ENCODE measurements at regions of chr15 and their contacts with region 1.

Region 1: GRCh38 chr15:97903971-97904572 is 56.4 kb upstream of the ARRDC4 start:
- DNase-seq: peak; percentile 51
- H3K4me3 ChIP-seq: no peak overlapping the region
- H3K27ac ChIP-seq: no peak overlapping the region
- H3K4me1 ChIP-seq: no peaks in the 10 kb centered on the region
- H3K27me3 ChIP-seq: no peaks in the 10 kb centered on the region
- CTCF ChIP-seq: peak in 3 of 4 experiments; percentile 41 to 70 (median 63)
- POLR2A ChIP-seq: no peak

Region 2: GRCh38 chr15:97552548-97552947 is 351.5 kb before region 1 on chr15:
- intact Hi-C with region 1: no loop called
- DNase-seq: no peak
- H3K4me3 ChIP-seq: no peak overlapping the region
- H3K27ac ChIP-seq: no peak overlapping the region
- H3K4me1 ChIP-seq: no peaks in the 10 kb centered on the region
- H3K27me3 ChIP-seq: no peaks in the 10 kb centered on the region
- CTCF ChIP-seq: no peak
- POLR2A ChIP-seq: no peak

Region 3: GRCh38 chr15:97585408-97585807 is 318.7 kb before region 1 on chr15:
- intact Hi-C with region 1: no loop called
- DNase-seq: no peak
- H3K4me3 ChIP-seq: no peak overlapping the region
- H3K27ac ChIP-seq: no peak overlapping the region
- H3K4me1 ChIP-seq: no peaks in the 10 kb centered on the region
- H3K27me3 ChIP-seq: no peaks in the 10 kb centered on the region
- CTCF ChIP-seq: no peak
- POLR2A ChIP-seq: no peak

Region 4: GRCh38 chr15:97947465-97948260 is 43.6 kb after region 1 on chr15:
- intact Hi-C with region 1: no loop called
- DNase-seq: no peak
- H3K4me3 ChIP-seq: no peak overlapping the region
- H3K27ac ChIP-seq: no peak overlapping the region
- H3K4me1 ChIP-seq: no peaks in the 10 kb centered on the region
- H3K27me3 ChIP-seq: no peaks in the 10 kb centered on the region
- CTCF ChIP-seq: no peak
- POLR2A ChIP-seq: no peak

Region 5: DNA sequence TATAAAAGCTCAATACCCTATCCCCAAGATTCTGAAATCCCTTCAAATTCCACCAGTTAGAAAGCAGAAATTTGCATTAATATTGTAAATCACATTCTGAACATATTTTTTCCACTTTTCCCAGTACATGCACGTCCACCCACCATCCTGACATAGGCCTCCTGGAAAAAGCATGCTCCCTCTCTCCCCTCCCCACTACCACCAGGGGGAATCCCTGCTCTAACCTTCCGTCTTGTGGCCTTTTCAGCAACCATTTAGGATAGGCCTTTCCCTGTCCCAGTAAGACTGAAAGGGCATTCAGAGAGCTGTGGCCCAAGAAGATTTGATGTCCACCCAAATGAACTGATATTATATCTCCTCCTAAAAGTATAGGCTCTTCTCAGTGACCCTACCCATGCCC is 238.5 kb after region 1 on chr15:
- intact Hi-C with region 1: no loop called
- DNase-seq: no peak
- H3K4me3 ChIP-seq: no peak overlapping the region
- H3K27ac ChIP-seq: no peak overlapping the region
- H3K4me1 ChIP-seq: no peaks in the 10 kb centered on the region
- H3K27me3 ChIP-seq: no peaks in the 10 kb centered on the region
- CTCF ChIP-seq: no peak
- POLR2A ChIP-seq: no peak

Region 6: GRCh38 chr15:98177924-98178592 is 274.0 kb after region 1 on chr15:
- intact Hi-C with region 1: loop called (anchors 1 kb)
- DNase-seq: peak; percentile 28
- H3K4me3 ChIP-seq: no peak overlapping the region
- H3K27ac ChIP-seq: no peak overlapping the region
- H3K4me1 ChIP-seq: no peaks in the 10 kb centered on the region
- H3K27me3 ChIP-seq: no peaks in the 10 kb centered on the region
- CTCF ChIP-seq: peak in 3 of 4 experiments; percentile 34 to 70 (median 62)
- POLR2A ChIP-seq: no peak

Region 7: GRCh38 chr15:98296653-98297052 is 392.6 kb after region 1 on chr15:
- intact Hi-C with region 1: loop called (anchors 5 kb)
- DNase-seq: no peak
- H3K4me3 ChIP-seq: no peak overlapping the region
- H3K27ac ChIP-seq: no peak overlapping the region
- H3K4me1 ChIP-seq: peaks cover 6% of the 10 kb centered on the region
- H3K27me3 ChIP-seq: no peaks in the 10 kb centered on the region
- CTCF ChIP-seq: no peak
- POLR2A ChIP-seq: no peak

Measured in prostate gland (tissue), 2 donors.